Breast epithelium (tissue), 4 donors: ENCODE measurements at regions of chr1 and their contacts with region 1.

Region 1: DNA sequence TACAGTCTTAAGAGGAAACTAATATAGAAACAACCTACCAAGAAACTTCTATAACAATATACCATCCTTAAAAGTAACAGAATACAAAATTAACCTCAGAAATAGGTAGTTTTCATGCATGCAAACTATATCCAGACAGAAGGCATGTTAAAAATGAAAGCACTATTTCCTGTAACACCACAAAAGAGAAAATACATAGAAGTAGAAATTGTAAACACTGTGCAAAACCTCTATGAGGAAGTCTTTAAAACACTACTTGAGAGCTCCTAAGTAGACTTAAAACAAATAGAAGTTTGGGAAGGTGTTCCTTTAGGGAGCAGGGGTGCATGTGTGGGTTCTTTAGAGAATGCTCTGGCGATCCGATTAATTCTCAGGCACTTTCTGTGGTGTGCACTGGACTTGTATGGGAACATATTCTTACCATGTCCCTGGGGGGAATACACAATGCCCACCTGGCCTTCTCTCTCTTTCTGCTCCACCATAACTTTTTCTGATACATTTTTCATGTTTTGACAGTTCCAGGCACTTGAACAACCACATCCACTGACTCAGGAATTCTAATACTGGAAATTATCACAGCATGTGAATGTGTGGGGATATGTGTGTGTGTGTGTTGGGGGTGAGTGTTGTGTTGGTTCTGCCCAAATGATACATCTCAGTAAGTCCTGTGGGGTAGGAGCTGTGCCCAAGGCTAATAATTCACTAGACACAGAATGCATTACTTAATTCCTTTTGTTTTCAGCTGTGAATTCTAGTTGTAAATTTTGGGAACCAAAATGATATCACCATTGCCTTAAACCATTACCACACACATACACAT is 866.3 kb upstream of the B3GALT2 start:
- DNase-seq: no peak
- H3K4me3 ChIP-seq: no peak overlapping the region
- H3K27ac ChIP-seq: no peak overlapping the region
- H3K4me1 ChIP-seq: no peaks in the 10 kb centered on the region
- H3K27me3 ChIP-seq: no peaks in the 10 kb centered on the region
- CTCF ChIP-seq: no peak
- POLR2A ChIP-seq: no peak

Region 2: DNA sequence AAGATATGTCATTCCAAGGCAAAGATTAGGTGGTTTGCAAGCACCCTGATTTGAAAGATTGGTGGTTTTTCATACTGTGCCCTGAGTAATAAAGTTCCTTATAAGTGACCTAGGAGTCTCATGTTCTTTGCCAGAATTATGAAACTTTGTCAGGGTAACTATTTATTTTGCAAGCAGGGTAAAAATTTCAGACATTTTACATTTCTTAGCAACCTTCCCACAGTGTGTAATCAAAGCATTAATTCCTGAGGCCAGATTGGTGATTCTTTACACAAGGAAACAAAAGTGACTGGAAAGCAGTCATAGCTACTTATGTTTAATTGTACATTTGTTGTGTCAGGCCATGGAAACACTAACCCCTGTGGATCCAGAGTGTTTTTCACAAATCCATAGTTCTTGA is 131.7 kb after region 1 on chr1:
- intact Hi-C with region 1: loop called (anchors 5 kb)
- DNase-seq: no peak
- H3K4me3 ChIP-seq: no peak overlapping the region
- H3K27ac ChIP-seq: no peak overlapping the region
- H3K4me1 ChIP-seq: no peaks in the 10 kb centered on the region
- H3K27me3 ChIP-seq: no peaks in the 10 kb centered on the region
- CTCF ChIP-seq: no peak
- POLR2A ChIP-seq: no peak